Prostate gland (tissue), 2 donors: ENCODE measurements at regions of chr7 and their contacts with region 1.

Region 1: GRCh38 chr7:155298834-155299534 is 1.3 kb downstream of the INSIG1 start:
- DNase-seq: peak; percentile 95
- H3K4me3 ChIP-seq: peak overlapping the region; percentile 82 to 95
- H3K27ac ChIP-seq: peak overlapping the region; percentile 93 to 97
- H3K4me1 ChIP-seq: peaks cover 6% of the 10 kb centered on the region
- H3K27me3 ChIP-seq: no peaks in the 10 kb centered on the region
- CTCF ChIP-seq: peak in 1 of 4 experiments; percentile 45
- POLR2A ChIP-seq: peak; percentile 62

Region 2: GRCh38 chr7:155073922-155074321 is 225.1 kb before region 1 on chr7:
- intact Hi-C with region 1: no loop called
- DNase-seq: no peak
- H3K4me3 ChIP-seq: no peak overlapping the region
- H3K27ac ChIP-seq: no peak overlapping the region
- H3K4me1 ChIP-seq: no peaks in the 10 kb centered on the region
- H3K27me3 ChIP-seq: no peaks in the 10 kb centered on the region
- CTCF ChIP-seq: no peak
- POLR2A ChIP-seq: no peak

Region 3: GRCh38 chr7:155166673-155167370 is 132.2 kb before region 1 on chr7:
- intact Hi-C with region 1: no loop called
- DNase-seq: no peak
- H3K4me3 ChIP-seq: no peak overlapping the region
- H3K27ac ChIP-seq: peak overlapping the region in 1 of 2 donors; percentile 61
- H3K4me1 ChIP-seq: no peaks in the 10 kb centered on the region
- H3K27me3 ChIP-seq: no peaks in the 10 kb centered on the region
- CTCF ChIP-seq: no peak
- POLR2A ChIP-seq: no peak

Region 4: GRCh38 chr7:155205368-155206317 is 93.3 kb before region 1 on chr7:
- intact Hi-C with region 1: loop called (anchors 10 kb)
- DNase-seq: peak; percentile 69
- H3K4me3 ChIP-seq: peak overlapping the region; percentile 19
- H3K27ac ChIP-seq: peak overlapping the region; percentile 18 to 66
- H3K4me1 ChIP-seq: no peaks in the 10 kb centered on the region
- H3K27me3 ChIP-seq: no peaks in the 10 kb centered on the region
- CTCF ChIP-seq: no peak
- POLR2A ChIP-seq: no peak

Region 5: GRCh38 chr7:155322530-155322929 is 23.5 kb after region 1 on chr7:
- intact Hi-C with region 1: no loop called
- DNase-seq: no peak
- H3K4me3 ChIP-seq: no peak overlapping the region
- H3K27ac ChIP-seq: no peak overlapping the region
- H3K4me1 ChIP-seq: no peaks in the 10 kb centered on the region
- H3K27me3 ChIP-seq: no peaks in the 10 kb centered on the region
- CTCF ChIP-seq: no peak
- POLR2A ChIP-seq: no peak